ENCODE measurements at regions of chr4 and their contacts with region 1.

Region 1: DNA sequence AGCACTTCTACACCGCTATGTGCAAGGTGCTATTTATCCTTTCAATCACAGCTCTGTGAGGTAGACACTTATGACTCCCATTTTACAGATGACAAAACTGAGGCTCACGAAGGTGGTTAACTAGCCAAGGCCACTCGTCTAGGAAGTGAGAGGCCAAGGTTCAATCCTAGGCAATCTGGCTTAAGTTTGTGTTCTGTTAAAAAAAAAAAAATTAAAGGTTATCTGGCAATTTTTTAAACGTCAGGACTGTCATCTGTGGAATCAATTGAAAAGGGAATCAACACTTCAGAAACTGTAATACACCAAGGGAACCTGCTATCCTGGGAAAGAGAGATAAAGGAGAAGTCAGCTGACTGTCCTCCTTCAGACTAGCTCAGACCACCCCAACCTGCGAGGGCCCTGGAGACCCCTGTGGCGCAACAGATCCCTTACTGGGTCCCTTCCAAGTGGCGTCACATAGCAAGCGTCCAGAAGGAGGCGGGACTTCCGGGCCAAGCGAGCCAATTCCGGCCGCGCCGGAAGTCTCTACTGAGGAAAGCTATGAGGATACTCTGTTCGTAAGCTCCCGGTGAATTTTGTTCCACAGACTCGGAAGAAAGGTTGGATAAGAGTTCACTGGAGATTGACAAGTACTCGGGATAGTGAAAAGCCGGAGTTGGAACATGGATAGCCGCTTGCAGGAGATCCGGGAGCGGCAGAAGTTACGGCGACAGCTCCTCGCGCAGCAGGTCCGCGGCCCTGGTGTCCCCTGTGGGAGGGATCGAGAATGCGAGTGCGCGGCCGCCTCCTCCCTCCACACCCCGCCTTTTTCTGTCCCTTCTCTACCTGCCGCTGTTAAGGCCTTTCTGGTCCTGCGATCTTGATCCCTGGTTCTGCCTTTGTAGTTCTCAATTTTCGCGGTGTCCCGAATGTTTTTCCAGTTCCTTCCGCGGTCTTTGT is at the start of gene METTL14:
- DNase-seq: peak; percentile 84
- ATAC-seq: peak; percentile 95
- H3K4me3 Mint-ChIP-seq: peak within 1 kb of the TSS; percentile 98
- H3K27ac Mint-ChIP-seq: peak within 1 kb of the TSS; percentile 95
- H3K4me1 Mint-ChIP-seq: peaks cover 23% of the 10 kb centered on the region
- H3K27me3 Mint-ChIP-seq: no peaks in the 10 kb centered on the region
- CTCF ChIP-seq: no peak
- total RNA-seq, gene METTL14: 56.5 and 62.7 TPM in 2 replicates

Region 2: DNA sequence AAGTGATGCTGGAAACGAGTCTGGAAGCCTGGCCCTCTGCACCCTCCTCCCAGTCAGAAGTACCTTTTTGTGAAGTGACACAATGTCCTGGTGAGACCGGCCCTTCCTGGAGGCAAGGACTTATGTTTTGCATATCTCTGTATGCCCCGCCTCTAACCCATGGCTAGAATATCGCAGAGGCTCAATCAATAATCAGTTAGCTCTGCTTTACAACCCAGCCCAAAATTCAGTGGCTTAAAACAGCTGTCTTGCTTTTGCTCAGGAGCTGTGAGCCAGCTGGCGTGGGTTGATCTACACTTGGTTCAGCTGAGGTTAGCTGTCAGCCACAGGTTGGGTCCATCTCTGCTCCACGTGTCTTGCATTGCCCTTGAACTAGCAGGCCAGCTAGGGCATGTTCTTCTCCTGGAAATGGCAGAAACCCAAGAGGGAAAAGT is 98.8 kb before region 1 on chr4:
- CTCF ChIA-PET with region 1: no interaction called
- POLR2A ChIA-PET with region 1: interaction called, 22 read pairs
- intact Hi-C with region 1: loop called (anchors 1 kb)
- DNase-seq: no peak
- ATAC-seq: no peak
- H3K4me3 Mint-ChIP-seq: no peak overlapping the region
- H3K27ac Mint-ChIP-seq: no peak overlapping the region
- H3K4me1 Mint-ChIP-seq: peaks cover 11% of the 10 kb centered on the region
- H3K27me3 Mint-ChIP-seq: peaks cover 20% of the 10 kb centered on the region
- CTCF ChIP-seq: no peak

Region 3: GRCh38 chr4:118835571-118836300 is 150.6 kb after region 1 on chr4 and contains the start of gene SEC24D:
- CTCF ChIA-PET with region 1: no interaction called
- POLR2A ChIA-PET with region 1: interaction called, 3 read pairs
- intact Hi-C with region 1: loop called (anchors 1 kb)
- DNase-seq: peak; percentile 90
- ATAC-seq: peak; percentile 88
- H3K4me3 Mint-ChIP-seq: peak within 1 kb of the TSS; percentile 100
- H3K27ac Mint-ChIP-seq: peak within 1 kb of the TSS; percentile 96
- H3K4me1 Mint-ChIP-seq: peaks cover 17% of the 10 kb centered on the region
- H3K27me3 Mint-ChIP-seq: no peaks in the 10 kb centered on the region
- CTCF ChIP-seq: no peak
- total RNA-seq, gene SEC24D: 19.4 and 22.6 TPM in 2 replicates

Region 4: GRCh38 chr4:118850488-118851173 is 165.5 kb after region 1 on chr4:
- CTCF ChIA-PET with region 1: no interaction called
- POLR2A ChIA-PET with region 1: no interaction called
- intact Hi-C with region 1: no loop called
- DNase-seq: no peak
- ATAC-seq: peak; percentile 88
- H3K4me3 Mint-ChIP-seq: peak overlapping the region; percentile 88
- H3K27ac Mint-ChIP-seq: peak overlapping the region; percentile 82
- H3K4me1 Mint-ChIP-seq: peaks cover 19% of the 10 kb centered on the region
- H3K27me3 Mint-ChIP-seq: peaks cover 6% of the 10 kb centered on the region
- CTCF ChIP-seq: no peak

Region 5: DNA sequence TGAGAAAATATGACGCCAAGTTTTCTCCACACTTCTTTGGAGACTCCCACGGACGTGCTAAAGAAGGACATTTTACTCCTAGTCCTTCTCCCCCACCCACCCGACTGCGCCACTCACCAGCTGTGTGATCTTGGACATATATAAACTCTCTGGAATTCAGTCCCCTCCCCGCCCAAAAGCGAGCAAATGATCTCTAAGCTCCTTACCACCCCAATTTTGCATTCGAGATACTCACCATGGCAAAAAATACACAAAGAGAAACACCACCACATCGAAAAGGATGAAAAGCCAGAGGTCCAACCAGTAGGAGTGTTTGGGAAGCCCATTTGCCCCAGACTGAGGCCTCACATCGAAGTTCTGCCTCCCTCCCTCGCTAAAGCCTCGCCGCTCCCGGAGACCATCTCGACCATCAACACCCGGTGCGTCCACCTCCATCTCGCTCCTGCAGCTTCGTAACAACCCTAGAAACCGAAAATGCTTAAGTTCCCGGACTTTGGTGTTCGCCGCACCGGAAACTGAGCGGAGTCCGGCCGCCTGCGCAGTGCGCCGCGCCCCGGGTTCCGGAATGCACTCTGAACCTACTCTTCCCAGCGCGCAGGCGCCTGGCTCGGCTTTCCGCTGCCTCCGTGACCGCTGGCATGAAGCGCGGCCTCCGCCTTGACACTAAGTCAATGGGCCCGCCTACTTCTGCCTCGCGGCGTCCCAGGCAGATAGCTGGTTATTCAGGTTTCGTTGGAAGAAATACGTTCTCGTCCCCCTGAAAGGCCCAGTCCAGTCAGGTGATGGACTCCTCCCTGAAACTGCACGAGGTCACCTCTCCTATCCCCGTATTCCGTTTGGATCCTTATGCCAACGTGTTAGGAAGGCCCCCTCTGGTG is 615.2 kb after region 1 on chr4:
- CTCF ChIA-PET with region 1: no interaction called
- POLR2A ChIA-PET with region 1: interaction called, 8 read pairs
- intact Hi-C with region 1: loop called (anchors 1 kb)
- DNase-seq: peak; percentile 88
- ATAC-seq: peak; percentile 95
- H3K4me3 Mint-ChIP-seq: peak overlapping the region; percentile 99
- H3K27ac Mint-ChIP-seq: peak overlapping the region; percentile 97
- H3K4me1 Mint-ChIP-seq: peaks cover 37% of the 10 kb centered on the region
- H3K27me3 Mint-ChIP-seq: no peaks in the 10 kb centered on the region
- CTCF ChIP-seq: no peak

Measured in activated B cell treated with CpG ODN at 0.5 μM for 24 hours (primary cell).